ENCODE measurements at regions of chr1 and their contacts with region 1.

Region 1: DNA sequence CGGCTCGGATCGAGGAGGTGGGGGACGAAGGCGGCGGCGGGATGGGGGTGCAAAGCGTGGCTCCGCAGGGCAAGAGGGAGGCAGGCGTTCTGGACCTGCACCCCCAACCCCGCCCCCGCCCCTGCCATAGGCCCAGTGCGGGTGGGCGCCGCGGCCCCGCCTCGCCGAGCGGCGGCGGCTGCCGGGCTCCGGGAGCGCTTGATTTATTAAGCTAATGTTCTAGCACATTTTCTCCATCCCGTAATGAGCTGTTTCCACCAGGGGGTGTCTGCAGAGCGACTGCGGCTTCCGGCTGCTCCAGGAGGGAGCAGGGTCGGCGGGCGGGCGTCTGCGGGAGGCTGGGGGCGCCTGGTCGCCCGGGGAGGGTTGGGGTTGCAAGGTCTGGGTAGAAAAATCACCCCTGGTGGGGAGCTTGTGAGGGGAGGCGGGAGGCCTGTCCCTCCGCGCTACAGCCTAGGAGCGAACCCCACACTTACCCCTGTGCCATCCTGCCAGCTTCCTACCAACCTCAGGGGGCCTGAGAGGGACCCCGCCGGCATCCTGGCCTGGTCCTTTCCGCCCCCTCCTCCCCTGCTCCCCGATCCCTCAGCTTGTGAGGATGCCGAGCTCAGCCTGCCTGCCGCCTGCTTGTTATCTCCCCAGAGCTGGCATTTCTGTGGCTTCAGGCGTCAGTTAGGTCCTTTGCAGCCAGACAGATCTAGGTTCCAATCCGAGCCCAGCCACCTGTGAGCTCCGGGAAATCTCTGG is 48.5 kb upstream of the ACOT11 start:
- DNase-seq: no peak
- H3K4me3 ChIP-seq: peak overlapping the region; percentile 38
- H3K27ac ChIP-seq: no peak overlapping the region
- H3K4me1 ChIP-seq: no peaks in the 10 kb centered on the region
- H3K27me3 ChIP-seq: no peaks in the 10 kb centered on the region
- CTCF ChIP-seq: peak; percentile 30

Region 2: DNA sequence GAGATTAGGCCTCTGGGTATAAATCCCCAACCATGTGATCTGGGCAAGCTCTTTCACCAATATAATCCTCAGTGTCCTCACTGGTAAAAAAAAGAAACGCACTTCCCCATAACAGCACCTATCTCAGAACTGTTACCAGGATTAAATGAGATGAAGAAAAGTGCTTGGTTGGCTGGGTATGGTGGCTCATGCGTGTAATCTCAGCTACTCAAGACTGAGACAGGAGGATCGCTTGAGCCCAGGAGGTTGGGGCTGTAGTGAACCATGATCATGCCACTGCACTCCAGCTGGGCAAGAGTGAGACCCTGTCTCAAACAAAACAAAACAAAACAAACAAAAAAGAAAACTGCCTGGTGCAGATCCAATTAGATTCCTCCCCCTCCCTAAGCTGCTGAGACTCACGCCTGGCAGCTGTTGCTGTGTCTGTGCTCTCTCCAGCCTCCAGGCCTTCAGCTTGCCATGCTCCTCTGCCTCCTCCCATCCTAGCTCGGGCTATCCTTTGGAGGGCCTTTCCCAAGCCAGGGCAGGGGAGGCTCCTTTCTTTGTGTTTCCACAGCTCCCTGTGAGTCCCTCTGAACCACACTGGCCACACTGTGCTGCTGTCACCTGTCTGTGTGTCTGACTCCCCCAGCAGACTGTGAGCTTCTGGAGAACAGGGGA is 318.7 kb before region 1 on chr1:
- intact Hi-C with region 1: loop called (anchors 10 kb)
- DNase-seq: no peak
- H3K4me3 ChIP-seq: no peak overlapping the region
- H3K27ac ChIP-seq: no peak overlapping the region
- H3K4me1 ChIP-seq: no peaks in the 10 kb centered on the region
- H3K27me3 ChIP-seq: no peaks in the 10 kb centered on the region
- CTCF ChIP-seq: no peak

Region 3: GRCh38 chr1:54810100-54810942 is 310.8 kb after region 1 on chr1:
- intact Hi-C with region 1: loop called (anchors 5 kb)
- DNase-seq: peak; percentile 82
- H3K4me3 ChIP-seq: no peak overlapping the region
- H3K27ac ChIP-seq: no peak overlapping the region
- H3K4me1 ChIP-seq: no peaks in the 10 kb centered on the region
- H3K27me3 ChIP-seq: no peaks in the 10 kb centered on the region
- CTCF ChIP-seq: peak; percentile 76

Measured in colonic mucosa (tissue), 4 donors.